A673 (cell line): ENCODE measurements at regions of chr6 and their contacts with region 1.

Region 1: DNA sequence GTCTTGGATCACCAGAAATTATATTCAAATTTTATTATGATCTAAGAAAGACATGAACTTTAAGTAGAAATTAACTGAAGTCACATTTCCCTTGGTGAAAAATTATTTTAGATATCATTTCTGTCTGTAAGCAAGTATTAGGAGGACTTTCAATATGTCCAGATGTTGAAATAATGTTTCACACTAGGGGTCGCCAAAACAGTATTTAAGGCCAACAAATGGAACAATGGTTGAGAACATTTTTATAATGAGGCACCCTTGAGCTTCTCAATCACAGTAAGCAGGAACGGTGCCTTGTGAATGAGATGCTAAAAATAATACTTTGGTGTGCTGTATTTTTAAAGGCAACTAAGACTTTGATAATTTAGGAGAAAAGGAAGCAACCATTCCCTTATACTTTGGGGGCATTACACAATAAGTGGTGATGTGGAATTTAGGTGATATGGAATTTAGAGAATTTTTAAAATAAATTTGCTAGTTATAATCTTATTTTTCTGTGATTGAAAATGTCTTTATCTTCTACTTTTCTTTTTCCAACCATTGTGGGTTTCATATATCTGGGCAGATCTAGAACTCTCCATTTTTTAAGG is 9.6 kb upstream of the SF3B5 start:
- DNase-seq: peak; percentile 85
- H3K4me3 ChIP-seq: no peak overlapping the region
- H3K27ac ChIP-seq: no peak overlapping the region
- H3K4me1 ChIP-seq: no peaks in the 10 kb centered on the region
- H3K27me3 ChIP-seq: no peaks in the 10 kb centered on the region
- CTCF ChIP-seq: peak; percentile 73

Region 2: DNA sequence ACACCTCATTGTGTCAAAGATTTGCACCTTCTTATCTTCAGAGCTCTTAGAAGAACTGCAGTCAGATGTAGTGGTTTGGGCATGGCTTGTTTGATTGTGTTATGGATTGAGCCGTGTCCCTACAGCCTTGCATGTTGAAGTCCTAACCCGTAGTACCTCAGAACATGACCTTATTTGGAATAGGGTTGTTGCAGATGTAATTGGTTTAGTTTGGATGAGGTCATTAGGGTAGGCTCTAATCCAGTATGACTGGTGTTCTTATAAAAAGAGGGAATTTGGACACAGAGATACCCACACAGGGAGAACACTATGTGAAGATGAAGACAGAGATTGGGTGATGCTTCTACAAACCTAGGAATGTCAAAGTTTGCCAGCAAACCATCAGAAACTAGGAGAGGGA is 462.6 kb before region 1 on chr6:
- CTCF ChIA-PET with region 1: no interaction called
- POLR2A ChIA-PET with region 1: no interaction called
- intact Hi-C with region 1: no loop called
- DNase-seq: no peak
- H3K4me3 ChIP-seq: no peak overlapping the region
- H3K27ac ChIP-seq: no peak overlapping the region
- H3K4me1 ChIP-seq: no peaks in the 10 kb centered on the region
- H3K27me3 ChIP-seq: no peaks in the 10 kb centered on the region
- CTCF ChIP-seq: no peak

Region 3: GRCh38 chr6:144215932-144216667 is 111.1 kb after region 1 on chr6:
- CTCF ChIA-PET with region 1: no interaction called
- POLR2A ChIA-PET with region 1: no interaction called
- intact Hi-C with region 1: loop called (anchors 2 kb)
- DNase-seq: peak; percentile 97
- H3K4me3 ChIP-seq: peak overlapping the region; percentile 65
- H3K27ac ChIP-seq: peak overlapping the region; percentile 94
- H3K4me1 ChIP-seq: no peaks in the 10 kb centered on the region
- H3K27me3 ChIP-seq: no peaks in the 10 kb centered on the region
- CTCF ChIP-seq: peak; percentile 77

Region 4: GRCh38 chr6:144284783-144285547 is 180.0 kb after region 1 on chr6 and contains the start of gene UTRN:
- CTCF ChIA-PET with region 1: no interaction called
- POLR2A ChIA-PET with region 1: no interaction called
- intact Hi-C with region 1: loop called (anchors 10 kb)
- DNase-seq: peak; percentile 89
- H3K4me3 ChIP-seq: peak within 1 kb of the TSS; percentile 87
- H3K27ac ChIP-seq: peak within 1 kb of the TSS; percentile 83
- H3K4me1 ChIP-seq: no peaks in the 10 kb centered on the region
- H3K27me3 ChIP-seq: no peaks in the 10 kb centered on the region
- CTCF ChIP-seq: peak; percentile 14; the same call in 1 of the 2 replicates
- total RNA-seq, gene UTRN: 75.2 and 82.8 TPM in 2 replicates

Region 5: GRCh38 chr6:144349690-144350527 is 244.9 kb after region 1 on chr6:
- CTCF ChIA-PET with region 1: no interaction called
- POLR2A ChIA-PET with region 1: no interaction called
- intact Hi-C with region 1: loop called (anchors 10 kb)
- DNase-seq: no peak
- H3K4me3 ChIP-seq: no peak overlapping the region
- H3K27ac ChIP-seq: no peak overlapping the region
- H3K4me1 ChIP-seq: peaks cover 41% of the 10 kb centered on the region
- H3K27me3 ChIP-seq: no peaks in the 10 kb centered on the region
- CTCF ChIP-seq: no peak

Region 6: DNA sequence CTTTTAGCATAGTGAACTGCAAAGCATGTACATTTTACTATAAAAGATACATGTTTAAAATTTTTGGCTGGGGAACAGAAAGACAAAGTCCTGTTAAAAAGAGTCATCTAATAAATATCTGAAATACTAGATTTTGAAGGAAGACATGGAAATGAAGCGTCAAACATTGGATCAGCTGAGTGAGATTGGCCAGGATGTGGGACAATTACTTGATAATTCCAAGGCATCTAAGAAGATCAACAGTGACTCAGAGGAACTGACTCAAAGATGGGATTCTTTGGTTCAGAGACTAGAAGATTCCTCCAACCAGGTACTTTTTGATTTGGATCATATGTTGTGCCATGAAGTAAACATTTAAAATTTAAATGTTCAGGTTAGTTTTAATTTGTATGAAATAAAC is 342.5 kb after region 1 on chr6:
- CTCF ChIA-PET with region 1: no interaction called
- POLR2A ChIA-PET with region 1: no interaction called
- intact Hi-C with region 1: no loop called
- DNase-seq: no peak
- H3K4me3 ChIP-seq: no peak overlapping the region
- H3K27ac ChIP-seq: no peak overlapping the region
- H3K4me1 ChIP-seq: no peaks in the 10 kb centered on the region
- H3K27me3 ChIP-seq: no peaks in the 10 kb centered on the region
- CTCF ChIP-seq: no peak

Region 7: DNA sequence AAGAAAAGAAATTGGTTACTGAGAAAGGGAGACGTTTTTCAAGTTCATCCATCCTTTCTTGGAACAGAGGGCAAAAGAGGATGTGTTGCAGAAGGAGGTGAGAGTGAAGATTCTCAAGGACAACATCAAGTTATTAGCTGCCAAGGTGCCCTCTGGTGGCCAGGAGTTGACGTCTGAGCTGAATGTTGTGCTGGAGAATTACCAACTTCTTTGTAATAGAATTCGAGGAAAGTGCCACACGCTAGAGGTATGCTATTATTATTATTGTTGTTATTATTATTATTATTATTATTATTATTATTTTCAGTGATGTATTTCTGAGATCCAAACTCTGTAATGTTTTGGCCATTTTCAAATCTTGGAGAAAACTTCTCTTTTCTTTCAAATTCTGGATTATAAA is 377.1 kb after region 1 on chr6:
- CTCF ChIA-PET with region 1: interaction called, 5 read pairs
- POLR2A ChIA-PET with region 1: no interaction called
- intact Hi-C with region 1: loop called (anchors 2 kb)
- DNase-seq: peak; percentile 86
- H3K4me3 ChIP-seq: no peak overlapping the region
- H3K27ac ChIP-seq: no peak overlapping the region
- H3K4me1 ChIP-seq: no peaks in the 10 kb centered on the region
- H3K27me3 ChIP-seq: no peaks in the 10 kb centered on the region
- CTCF ChIP-seq: peak; percentile 80

Region 8: GRCh38 chr6:144574796-144575195 is 469.8 kb after region 1 on chr6:
- CTCF ChIA-PET with region 1: no interaction called
- POLR2A ChIA-PET with region 1: no interaction called
- intact Hi-C with region 1: no loop called
- DNase-seq: no peak
- H3K4me3 ChIP-seq: no peak overlapping the region
- H3K27ac ChIP-seq: no peak overlapping the region
- H3K4me1 ChIP-seq: peaks cover 7% of the 10 kb centered on the region
- H3K27me3 ChIP-seq: no peaks in the 10 kb centered on the region
- CTCF ChIP-seq: no peak

Region 9: GRCh38 chr6:144659202-144660182 is 554.5 kb after region 1 on chr6:
- CTCF ChIA-PET with region 1: no interaction called
- POLR2A ChIA-PET with region 1: no interaction called
- intact Hi-C with region 1: no loop called
- DNase-seq: no peak
- H3K4me3 ChIP-seq: no peak overlapping the region
- H3K27ac ChIP-seq: no peak overlapping the region
- H3K4me1 ChIP-seq: peaks cover 54% of the 10 kb centered on the region
- H3K27me3 ChIP-seq: no peaks in the 10 kb centered on the region
- CTCF ChIP-seq: no peak

Region 10: DNA sequence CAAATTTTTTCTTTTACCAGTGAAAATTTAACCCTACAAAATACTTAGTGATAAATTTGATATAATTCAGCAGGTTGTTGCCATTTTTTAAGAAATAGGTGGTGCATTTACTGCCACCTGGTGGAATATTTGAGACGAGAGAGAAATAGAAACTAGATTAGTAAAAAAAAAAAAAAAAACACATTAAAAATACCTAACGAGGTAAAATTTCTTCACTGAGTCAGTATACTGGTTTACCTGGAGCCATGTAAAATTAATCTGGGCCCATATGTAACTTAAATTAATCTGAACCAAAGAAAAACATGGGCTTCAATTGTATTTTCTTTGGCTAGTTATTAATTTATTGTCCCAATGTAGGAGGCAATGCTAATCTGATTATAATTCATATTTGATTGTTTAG is 1109.6 kb after region 1 on chr6:
- CTCF ChIA-PET with region 1: no interaction called
- POLR2A ChIA-PET with region 1: no interaction called
- intact Hi-C with region 1: loop called (anchors 5 kb)
- DNase-seq: peak; percentile 72
- H3K4me3 ChIP-seq: no peak overlapping the region
- H3K27ac ChIP-seq: peak overlapping the region; percentile 60
- H3K4me1 ChIP-seq: peaks cover 17% of the 10 kb centered on the region
- H3K27me3 ChIP-seq: no peaks in the 10 kb centered on the region
- CTCF ChIP-seq: peak; percentile 78

Region 11: DNA sequence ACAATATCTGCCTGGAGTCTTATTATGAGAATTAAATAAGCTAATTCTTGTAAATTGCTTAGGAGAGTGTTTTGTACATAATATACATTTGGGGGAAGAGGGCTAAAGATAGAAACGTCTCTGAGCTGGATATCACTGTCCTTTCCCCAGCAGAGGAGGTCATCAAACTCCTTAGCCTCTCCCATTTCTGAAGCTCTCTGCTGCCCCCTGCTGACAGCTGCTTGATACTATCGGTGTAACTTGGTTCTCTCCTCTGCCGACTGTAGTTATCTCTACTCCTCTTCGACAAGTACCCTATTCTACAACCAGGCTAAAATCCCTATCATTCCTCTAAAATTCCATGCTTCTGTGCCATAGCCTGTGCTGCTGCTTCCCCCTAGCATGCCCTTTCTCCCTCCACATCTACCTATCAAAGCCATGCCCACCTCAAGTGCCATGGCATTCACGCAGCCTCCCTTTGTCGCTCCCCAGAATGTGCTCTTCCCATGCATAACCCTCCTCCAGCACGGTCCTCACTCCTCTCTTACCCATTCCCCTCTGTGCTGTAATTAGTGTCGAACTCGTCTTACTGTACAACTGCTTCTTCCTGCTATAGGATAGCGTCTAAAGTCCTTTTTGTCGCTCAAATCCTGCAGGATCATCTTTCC is 1529.1 kb after region 1 on chr6:
- CTCF ChIA-PET with region 1: interaction called, 5 read pairs
- POLR2A ChIA-PET with region 1: no interaction called
- intact Hi-C with region 1: loop called (anchors 10 kb)
- DNase-seq: peak; percentile 91
- H3K4me3 ChIP-seq: no peak overlapping the region
- H3K27ac ChIP-seq: no peak overlapping the region
- H3K4me1 ChIP-seq: peaks cover 39% of the 10 kb centered on the region
- H3K27me3 ChIP-seq: no peaks in the 10 kb centered on the region
- CTCF ChIP-seq: peak; percentile 90